Aorta (tissue), 5 donors: ENCODE measurements at regions of chr3 and their contacts with region 1.

Region 1: DNA sequence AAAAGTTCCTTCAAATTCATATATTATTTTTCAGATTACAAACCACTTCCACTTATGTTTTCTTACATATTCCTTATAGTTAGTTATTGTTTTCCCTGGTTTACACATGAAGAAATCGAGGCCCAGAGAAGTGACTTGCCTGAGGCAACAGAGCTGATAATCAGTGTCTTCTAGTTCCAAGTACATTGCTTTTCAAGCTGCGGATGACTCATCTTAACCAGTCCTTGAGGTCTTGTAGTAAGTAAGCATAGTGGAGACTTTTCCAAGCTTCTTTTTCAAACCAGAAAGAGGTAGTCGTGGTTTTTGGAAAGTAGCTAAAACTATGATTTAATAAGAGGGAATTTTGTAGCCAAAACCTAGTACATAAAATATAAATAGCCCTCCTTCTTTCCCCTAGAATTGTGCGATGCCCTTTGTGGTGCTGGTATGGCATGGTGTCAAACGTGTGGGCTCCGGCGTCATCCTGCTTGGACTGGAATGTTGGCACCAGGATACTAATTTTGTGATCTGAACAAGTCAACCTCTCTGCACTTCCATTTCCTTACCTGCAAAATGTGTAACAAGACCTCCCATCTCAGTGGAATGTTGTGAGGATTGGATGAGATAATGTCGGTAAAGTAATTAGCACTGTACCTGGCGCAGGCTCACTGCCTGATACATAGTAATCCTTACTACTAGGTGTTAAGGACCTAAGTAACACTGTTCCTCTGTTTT is 19.0 kb upstream of the DLG1 start:
- DNase-seq: no peak
- ATAC-seq: peak; percentile 71
- H3K4me3 ChIP-seq: no peak overlapping the region
- H3K27ac ChIP-seq: no peak overlapping the region
- H3K4me1 ChIP-seq: no peaks in the 10 kb centered on the region
- H3K27me3 ChIP-seq: no peaks in the 10 kb centered on the region

Region 2: DNA sequence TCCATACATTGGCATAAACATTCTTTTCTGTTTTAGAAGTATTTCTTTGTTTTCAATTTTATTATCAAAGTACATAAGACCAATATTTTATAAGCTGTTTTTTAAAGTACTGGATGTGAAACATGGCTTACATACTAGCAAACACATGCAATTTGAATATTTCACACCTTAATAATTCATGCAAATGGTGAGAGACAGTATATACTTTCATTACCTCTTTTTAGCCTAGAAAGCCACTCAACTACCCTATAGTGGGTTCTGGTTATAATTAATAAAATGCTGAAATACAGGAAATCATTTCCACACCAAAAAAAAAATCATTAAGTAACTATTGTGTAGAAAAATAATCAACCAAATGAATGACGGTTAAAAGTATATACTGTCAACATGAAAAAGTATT is 249.3 kb before region 1 on chr3:
- intact Hi-C with region 1: no loop called
- DNase-seq: no peak
- ATAC-seq: no peak
- H3K4me3 ChIP-seq: no peak overlapping the region
- H3K27ac ChIP-seq: no peak overlapping the region
- H3K4me1 ChIP-seq: no peaks in the 10 kb centered on the region
- H3K27me3 ChIP-seq: no peaks in the 10 kb centered on the region

Region 3: GRCh38 chr3:197256836-197257444 is 60.5 kb before region 1 on chr3:
- intact Hi-C with region 1: no loop called
- DNase-seq: no peak
- ATAC-seq: no peak
- H3K4me3 ChIP-seq: no peak overlapping the region
- H3K27ac ChIP-seq: no peak overlapping the region
- H3K4me1 ChIP-seq: no peaks in the 10 kb centered on the region
- H3K27me3 ChIP-seq: no peaks in the 10 kb centered on the region

Region 4: DNA sequence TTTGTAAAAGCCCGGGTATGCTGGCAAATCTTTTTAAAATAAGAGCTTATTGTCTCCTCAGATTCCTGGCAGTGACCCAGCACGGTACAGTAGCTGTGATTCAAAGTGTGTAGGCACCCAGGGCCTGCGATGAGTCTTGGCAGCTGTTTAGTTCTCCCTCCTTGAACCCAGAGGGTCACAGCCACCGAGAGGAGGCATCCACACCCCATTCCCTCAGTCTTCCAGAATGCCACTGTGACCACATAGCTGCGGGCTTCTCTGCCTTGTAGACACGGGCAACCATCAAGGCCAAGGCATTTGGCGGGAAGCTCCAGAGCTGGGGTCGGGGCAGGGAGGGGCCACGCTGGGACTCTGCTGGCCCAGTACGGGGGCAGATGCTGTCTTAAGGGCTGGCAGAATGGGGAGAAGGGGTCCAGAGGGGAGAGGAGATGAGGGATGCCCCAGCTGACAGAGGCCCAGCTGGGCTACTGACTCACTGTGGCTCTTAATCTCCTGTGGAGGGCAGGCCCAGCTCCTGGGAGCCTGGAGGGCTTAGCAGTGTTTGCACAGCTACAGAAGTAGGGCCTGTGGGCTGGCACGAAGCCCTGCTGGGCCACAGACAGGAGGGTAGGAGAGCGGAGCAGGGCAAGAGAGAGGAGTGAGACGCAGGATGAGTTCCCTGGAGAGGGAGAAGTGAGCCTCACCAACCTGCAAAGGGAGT is 49.8 kb after region 1 on chr3:
- intact Hi-C with region 1: loop called in 1 of 2 experiments (anchors 5 kb)
- DNase-seq: no peak
- ATAC-seq: no peak
- H3K4me3 ChIP-seq: no peak overlapping the region
- H3K27ac ChIP-seq: no peak overlapping the region
- H3K4me1 ChIP-seq: no peaks in the 10 kb centered on the region
- H3K27me3 ChIP-seq: no peaks in the 10 kb centered on the region